Activated B cell treated with CpG ODN at 0.5 μM for 24 hours (primary cell): ENCODE measurements at regions of chr1 and their contacts with region 1.

Region 1: DNA sequence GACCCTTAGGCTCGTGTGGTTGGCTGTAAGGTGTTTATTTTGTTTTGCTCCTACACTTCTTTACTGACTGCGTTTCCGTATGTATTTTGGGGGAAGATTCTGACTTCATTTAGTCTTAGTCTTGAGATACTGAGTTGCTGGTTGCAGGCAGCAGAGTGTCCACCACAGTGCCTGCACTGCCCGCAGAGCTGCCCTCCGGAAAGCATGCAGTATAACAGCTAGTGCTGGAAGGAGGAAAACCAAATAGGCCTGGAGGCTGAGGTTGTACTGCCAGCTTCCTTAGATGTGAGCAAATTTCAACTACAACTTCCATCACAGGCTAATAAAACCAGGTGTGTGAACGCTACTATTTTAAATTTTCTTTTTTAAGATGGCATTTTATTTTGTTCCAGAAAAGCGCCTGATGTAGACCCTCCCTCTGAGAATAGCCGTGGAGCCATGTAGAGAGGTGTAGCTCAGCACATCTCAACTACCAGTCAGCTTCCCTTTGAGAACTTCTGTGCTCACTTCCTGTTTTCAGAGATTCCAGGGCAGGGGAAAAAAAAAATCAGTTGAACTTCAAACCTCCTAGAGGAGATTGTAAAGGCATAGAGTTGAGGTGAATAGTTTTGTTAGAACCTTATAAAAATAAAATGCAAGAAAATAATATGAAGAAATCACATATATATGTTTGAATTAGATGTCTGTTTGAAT is 17.6 kb downstream of the LMO4 start:
- DNase-seq: no peak
- ATAC-seq: no peak
- H3K4me3 Mint-ChIP-seq: no peak overlapping the region
- H3K27ac Mint-ChIP-seq: no peak overlapping the region
- H3K4me1 Mint-ChIP-seq: peaks cover 12% of the 10 kb centered on the region
- H3K27me3 Mint-ChIP-seq: no peaks in the 10 kb centered on the region
- CTCF ChIP-seq: no peak

Region 2: GRCh38 chr1:87335175-87335884 is 10.9 kb before region 1 on chr1:
- CTCF ChIA-PET with region 1: interaction called, 3 read pairs
- POLR2A ChIA-PET with region 1: interaction called, 20 read pairs
- intact Hi-C with region 1: no loop called
- DNase-seq: peak; percentile 69
- ATAC-seq: peak; percentile 65
- H3K4me3 Mint-ChIP-seq: peak overlapping the region; percentile 89
- H3K27ac Mint-ChIP-seq: peak overlapping the region; percentile 93
- H3K4me1 Mint-ChIP-seq: peaks cover 62% of the 10 kb centered on the region
- H3K27me3 Mint-ChIP-seq: no peaks in the 10 kb centered on the region
- CTCF ChIP-seq: no peak

Region 3: GRCh38 chr1:87358219-87358618 is 12.0 kb after region 1 on chr1:
- CTCF ChIA-PET with region 1: no interaction called
- POLR2A ChIA-PET with region 1: no interaction called
- intact Hi-C with region 1: no loop called
- DNase-seq: no peak
- ATAC-seq: no peak
- H3K4me3 Mint-ChIP-seq: no peak overlapping the region
- H3K27ac Mint-ChIP-seq: no peak overlapping the region
- H3K4me1 Mint-ChIP-seq: no peaks in the 10 kb centered on the region
- H3K27me3 Mint-ChIP-seq: no peaks in the 10 kb centered on the region
- CTCF ChIP-seq: no peak